ENCODE measurements at regions of chr16 and their contacts with region 1.

Region 1: DNA sequence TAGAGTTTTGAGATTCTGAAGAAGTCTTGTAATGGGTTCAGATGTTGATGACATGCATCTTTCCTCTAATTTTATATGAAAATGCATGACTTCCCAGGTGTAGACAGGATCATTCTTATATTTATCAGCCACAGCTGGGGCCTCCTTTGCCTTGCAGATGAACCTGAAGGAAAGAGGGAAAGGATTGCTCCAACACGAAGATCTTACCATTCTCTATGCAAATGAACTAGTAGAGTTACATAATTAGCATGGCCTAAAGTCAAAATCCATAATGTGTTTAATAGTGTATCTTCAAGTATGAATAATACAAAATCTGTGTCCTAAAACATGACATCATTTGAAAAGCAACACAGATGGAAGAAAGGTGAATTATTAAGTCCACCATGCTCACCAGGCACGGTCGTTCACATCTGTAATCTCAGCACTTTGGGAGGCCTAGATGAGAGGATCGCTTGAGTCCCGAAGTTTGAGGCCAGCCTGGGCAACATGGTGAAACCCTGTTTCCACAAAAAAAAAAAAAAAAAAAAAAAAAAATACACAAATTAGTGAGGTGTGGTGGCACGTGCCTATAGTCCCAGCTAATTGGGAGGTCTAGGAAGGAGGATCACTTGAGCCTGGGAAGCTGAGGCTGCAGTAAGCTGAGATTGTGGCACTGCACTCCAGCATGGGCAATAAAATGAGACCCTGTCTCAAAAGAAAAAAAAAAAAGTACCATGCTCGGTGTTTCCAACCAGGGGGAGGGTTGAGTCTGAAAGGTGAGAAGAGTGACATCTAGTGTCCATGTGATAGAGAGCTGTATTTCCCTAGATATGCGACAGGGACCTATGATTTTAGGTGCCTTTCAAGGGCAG is 6.3 kb downstream of the VWA3A start:
- DNase-seq: no peak

Region 2: DNA sequence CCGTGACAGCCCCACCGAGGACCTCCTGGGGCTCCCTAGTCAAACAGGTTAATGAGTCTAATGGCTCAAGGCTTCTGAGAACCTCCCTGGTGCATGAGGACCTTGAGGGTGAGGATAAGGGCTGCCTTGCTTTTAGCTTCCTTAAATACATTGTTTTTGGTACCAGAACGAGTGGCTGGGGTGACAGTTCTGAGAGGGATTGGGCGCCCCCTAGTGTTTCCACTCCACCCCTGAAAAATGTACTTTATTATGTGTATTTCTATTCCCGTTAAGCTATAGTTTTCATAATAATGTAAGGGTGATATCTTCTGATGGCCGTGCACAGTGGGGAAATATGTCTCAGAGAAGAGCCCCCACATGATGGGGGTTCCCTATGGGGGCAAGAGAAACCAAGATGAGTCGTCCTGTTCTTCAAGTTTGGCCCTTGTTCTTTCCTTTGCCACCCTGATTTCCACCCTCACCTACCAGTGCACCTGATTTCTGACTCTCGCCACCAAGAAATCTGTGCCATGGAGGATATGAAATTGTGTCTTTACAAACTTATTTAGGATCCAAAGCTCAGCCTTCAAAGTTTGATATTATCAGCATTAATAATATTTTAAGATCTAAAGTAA is 20.8 kb before region 1 on chr16:
- intact Hi-C with region 1: no loop called
- DNase-seq: peak; percentile 83

Region 3: DNA sequence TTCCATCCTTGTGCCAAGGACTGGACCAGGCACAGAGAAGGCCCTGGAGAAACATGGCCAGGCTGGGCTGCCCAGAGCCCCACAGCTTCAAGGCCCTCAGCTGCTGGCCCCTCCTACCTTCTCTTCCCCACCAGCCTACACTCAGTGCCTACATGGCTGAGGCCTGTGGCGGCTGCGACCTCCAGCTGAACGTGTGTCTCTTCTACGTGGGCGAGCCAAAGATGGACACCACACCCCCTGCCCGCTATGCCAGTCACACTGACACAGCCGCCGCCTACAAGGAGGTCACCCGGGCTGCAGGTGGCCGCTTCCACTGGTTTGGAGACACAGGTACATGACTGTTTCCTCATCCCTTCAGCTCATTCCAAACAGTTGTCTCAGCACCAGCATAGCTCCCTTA is 34.1 kb after region 1 on chr16:
- intact Hi-C with region 1: loop called in 1 of 2 experiments (anchors 1 kb)
- DNase-seq: no peak

Measured in posterior vena cava (tissue), 2 donors.